Activated B cell treated with CpG ODN at 0.5 μM for 24 hours (primary cell): ENCODE measurements at regions of chr1 and their contacts with region 1.

Region 1: GRCh38 chr1:230978491-230979388 is at the starts of genes ARV1 and TTC13:
- DNase-seq: peak; percentile 93
- ATAC-seq: peak; percentile 95
- H3K4me3 Mint-ChIP-seq: peak within 1 kb of the TSS; percentile 96
- H3K27ac Mint-ChIP-seq: peak within 1 kb of the TSS; percentile 99
- H3K4me1 Mint-ChIP-seq: peaks cover 29% of the 10 kb centered on the region
- H3K27me3 Mint-ChIP-seq: no peaks in the 10 kb centered on the region
- CTCF ChIP-seq: no peak
- total RNA-seq, gene ARV1: 13.1 and 13.7 TPM in 2 replicates
- total RNA-seq, gene TTC13: 30.9 and 35.4 TPM in 2 replicates

Region 2: DNA sequence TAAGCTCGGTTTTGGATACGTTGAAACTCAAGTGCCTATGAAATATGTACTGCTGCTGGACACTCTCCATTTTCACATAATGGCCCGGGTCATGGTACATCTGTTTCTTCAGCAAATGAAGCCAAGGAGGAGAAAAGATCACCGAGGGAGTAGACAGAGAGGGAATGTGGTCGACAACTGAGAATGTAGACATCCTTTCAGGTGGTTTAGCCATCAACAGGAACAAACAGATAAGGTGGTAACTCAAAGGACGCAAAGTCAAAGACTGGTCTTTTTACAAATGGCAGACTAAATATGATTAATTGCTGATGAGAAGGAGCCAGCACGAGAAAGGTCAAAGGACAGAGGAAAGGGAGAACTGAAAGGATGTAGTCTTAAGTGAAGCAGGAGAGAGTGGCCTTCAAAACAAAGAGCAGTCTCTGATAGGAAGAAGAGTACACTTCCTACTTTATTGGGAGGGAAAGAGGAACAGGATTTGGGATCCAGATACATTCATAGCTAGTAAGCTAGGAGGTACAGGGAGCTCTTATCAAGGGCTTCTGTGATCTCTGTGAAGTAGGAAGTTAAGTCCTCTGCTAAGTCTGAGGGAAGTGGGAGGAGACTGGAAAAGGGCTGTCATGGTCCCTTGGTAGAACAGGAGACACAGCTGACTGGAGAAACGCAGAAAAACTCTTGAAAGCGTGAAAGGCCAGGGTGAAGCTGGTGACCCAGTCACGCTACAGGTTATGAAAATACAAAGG is 1498.9 kb before region 1 on chr1:
- CTCF ChIA-PET with region 1: no interaction called
- POLR2A ChIA-PET with region 1: no interaction called
- intact Hi-C with region 1: loop called (anchors 5 kb)
- DNase-seq: peak; percentile 25
- ATAC-seq: peak; percentile 85
- H3K4me3 Mint-ChIP-seq: peak overlapping the region; percentile 33
- H3K27ac Mint-ChIP-seq: peak overlapping the region; percentile 89
- H3K4me1 Mint-ChIP-seq: peaks cover 46% of the 10 kb centered on the region
- H3K27me3 Mint-ChIP-seq: no peaks in the 10 kb centered on the region
- CTCF ChIP-seq: no peak

Region 3: GRCh38 chr1:230599926-230600653 is 378.6 kb before region 1 on chr1:
- CTCF ChIA-PET with region 1: no interaction called
- POLR2A ChIA-PET with region 1: no interaction called
- intact Hi-C with region 1: no loop called
- DNase-seq: no peak
- ATAC-seq: no peak
- H3K4me3 Mint-ChIP-seq: no peak overlapping the region
- H3K27ac Mint-ChIP-seq: no peak overlapping the region
- H3K4me1 Mint-ChIP-seq: no peaks in the 10 kb centered on the region
- H3K27me3 Mint-ChIP-seq: peaks cover 16% of the 10 kb centered on the region
- CTCF ChIP-seq: no peak

Region 4: DNA sequence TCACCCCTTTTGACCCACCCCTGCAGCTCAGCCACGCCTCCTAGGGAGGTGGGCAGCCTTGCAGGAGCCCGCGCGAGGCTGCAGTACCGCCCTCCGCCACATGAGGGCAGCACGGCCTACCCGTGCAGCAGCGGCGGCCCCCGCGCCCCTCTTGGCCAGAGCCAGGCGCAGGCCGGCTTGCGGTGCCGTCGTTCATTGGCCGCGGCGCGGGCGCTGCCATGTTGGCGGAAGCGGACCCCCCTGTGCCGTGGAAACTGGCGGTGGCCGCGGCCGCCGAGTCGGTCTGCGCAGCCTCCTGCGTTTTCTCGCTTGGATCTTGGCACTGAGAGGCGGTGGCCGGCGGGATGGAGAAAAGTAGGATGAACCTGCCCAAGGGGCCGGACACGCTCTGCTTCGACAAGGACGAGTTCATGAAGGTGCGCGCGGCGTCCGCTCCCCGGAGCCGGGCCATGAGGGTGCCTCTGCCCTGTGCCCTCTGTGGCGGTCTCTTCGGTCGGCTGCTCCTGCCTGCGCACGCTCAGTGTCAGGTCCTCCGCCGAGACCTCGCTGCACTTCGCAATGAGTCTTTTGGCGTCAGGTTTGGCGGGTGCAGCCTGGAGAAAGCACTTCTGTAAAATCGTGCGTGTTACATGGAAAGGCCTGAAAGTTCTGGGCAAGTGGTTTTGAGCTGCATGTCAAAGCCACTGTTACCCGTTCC is 336.3 kb before region 1 on chr1 and contains the start of gene COG2:
- CTCF ChIA-PET with region 1: no interaction called
- POLR2A ChIA-PET with region 1: no interaction called
- intact Hi-C with region 1: loop called (anchors 1 kb)
- DNase-seq: peak; percentile 100
- ATAC-seq: peak; percentile 87
- H3K4me3 Mint-ChIP-seq: peak within 1 kb of the TSS; percentile 98
- H3K27ac Mint-ChIP-seq: peak within 1 kb of the TSS; percentile 96
- H3K4me1 Mint-ChIP-seq: peaks cover 50% of the 10 kb centered on the region
- H3K27me3 Mint-ChIP-seq: peaks cover 8% of the 10 kb centered on the region
- CTCF ChIP-seq: peak; percentile 96
- total RNA-seq, gene COG2: 38.5 and 39.0 TPM in 2 replicates

Region 5: DNA sequence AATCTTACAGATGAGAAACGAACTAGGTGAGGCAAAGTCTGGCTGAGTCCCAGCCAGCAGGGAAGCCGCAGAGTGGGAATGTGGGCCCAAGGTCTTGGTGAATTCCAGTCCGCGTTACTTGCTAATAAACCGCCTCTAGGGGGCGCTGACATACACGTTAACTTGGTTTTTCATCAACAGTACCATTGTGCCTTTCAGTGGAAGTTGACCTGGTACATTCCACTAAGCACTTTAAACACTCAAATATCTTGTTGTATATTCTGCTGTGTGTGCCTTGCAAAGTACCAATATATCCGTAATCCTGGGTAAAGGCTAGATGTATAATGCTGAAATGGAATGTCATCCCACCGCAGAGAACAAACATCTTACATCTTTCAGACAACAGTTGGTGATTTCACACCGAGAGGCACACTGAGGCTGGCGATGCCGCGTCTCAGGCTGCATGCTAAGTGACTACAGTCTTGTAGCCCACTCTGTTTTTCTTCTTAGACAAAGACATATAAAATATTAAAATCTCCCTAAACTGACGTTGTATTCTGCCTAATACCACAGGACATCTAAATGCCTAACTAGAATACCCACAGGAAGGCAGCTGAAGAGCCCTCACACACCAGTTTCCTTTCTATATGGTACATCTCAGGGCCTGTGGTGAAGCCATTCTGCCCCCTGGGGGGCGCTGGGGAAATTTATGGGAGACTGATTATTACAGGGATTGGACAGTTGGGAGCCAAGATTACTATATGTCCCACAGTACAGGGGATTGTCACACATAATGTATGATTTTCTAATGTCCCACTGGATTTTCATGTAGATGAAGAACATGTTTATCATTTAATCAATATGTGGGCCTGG is 61.2 kb before region 1 on chr1:
- CTCF ChIA-PET with region 1: interaction called, 13 read pairs
- POLR2A ChIA-PET with region 1: no interaction called
- intact Hi-C with region 1: loop called (anchors 1 kb)
- DNase-seq: peak; percentile 36
- ATAC-seq: peak; percentile 79
- H3K4me3 Mint-ChIP-seq: no peak overlapping the region
- H3K27ac Mint-ChIP-seq: peak overlapping the region; percentile 11
- H3K4me1 Mint-ChIP-seq: no peaks in the 10 kb centered on the region
- H3K27me3 Mint-ChIP-seq: no peaks in the 10 kb centered on the region
- CTCF ChIP-seq: peak; percentile 52

Region 6: DNA sequence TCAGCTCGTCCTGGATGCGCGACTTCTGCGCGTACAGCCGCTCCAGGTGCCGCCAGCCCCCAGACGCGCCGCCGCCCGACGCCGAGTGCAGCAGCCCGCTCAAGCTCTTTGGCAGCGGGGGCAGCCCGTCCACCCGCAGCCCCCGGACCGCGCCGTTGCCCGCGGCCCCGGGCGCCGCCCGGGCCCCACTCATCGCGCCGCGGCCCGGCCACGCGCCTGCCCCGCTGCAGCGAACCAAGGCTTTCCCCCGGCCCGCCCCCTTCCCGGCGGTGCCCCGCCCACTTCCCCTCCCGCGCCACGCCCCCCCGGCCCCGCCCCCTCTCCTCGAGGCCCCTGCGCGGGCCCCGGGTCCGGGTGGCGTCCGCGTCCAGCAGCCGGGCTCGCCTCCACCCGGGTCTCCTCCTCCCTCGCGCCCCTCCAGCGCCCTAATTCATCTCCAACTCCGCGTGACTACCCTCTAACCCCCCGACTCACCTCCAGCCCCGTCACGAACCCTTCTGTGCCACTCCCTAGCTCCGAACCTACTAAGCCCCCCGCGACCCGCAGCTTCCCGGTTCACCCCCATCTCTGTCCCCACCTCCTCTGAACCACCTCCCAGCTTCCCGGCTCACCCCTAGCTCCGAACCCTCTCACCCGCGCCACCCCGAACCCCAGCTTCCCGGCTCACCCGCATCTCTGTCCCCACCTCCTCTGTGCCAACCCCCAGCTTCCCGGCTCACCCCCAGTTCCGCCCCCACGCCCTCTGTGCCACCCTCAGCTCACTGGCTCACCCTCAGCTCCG is 61.5 kb after region 1 on chr1 and contains the start of gene FAM89A:
- CTCF ChIA-PET with region 1: no interaction called
- POLR2A ChIA-PET with region 1: interaction called, 17 read pairs
- intact Hi-C with region 1: loop called (anchors 1 kb)
- DNase-seq: peak; percentile 70
- ATAC-seq: peak; percentile 84
- H3K4me3 Mint-ChIP-seq: peak within 1 kb of the TSS; percentile 85
- H3K27ac Mint-ChIP-seq: peak within 1 kb of the TSS; percentile 35
- H3K4me1 Mint-ChIP-seq: peaks cover 17% of the 10 kb centered on the region
- H3K27me3 Mint-ChIP-seq: peaks cover 4% of the 10 kb centered on the region
- CTCF ChIP-seq: no peak
- total RNA-seq, gene FAM89A: 5.2 and 5.3 TPM in 2 replicates

Region 7: DNA sequence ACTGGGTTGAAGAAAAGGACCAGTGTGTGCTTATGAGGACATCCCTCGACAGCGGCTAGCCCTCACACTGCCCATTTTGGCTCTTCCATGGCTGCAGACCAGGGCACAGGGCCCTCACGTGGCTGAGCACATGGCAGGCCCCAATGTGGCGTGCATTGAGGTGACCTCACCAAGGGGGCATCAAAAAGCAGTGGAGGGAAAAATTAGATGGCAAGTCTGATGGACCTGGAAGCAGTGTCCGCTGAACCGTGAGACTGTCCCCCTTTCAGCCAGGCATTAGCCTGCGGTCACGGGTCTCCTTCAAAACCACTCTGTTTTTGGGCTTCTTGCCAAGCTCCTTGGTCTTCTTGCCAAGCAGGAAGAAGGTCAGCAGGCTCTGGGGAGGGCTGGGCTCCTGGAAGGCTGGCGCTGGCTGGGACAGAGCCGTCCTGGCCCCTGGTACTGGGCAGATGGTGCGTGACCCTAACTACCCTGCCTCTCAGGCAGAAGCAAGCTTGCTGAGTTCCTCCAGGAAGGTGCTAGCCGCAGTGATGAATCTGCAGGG is 214.0 kb after region 1 on chr1:
- CTCF ChIA-PET with region 1: no interaction called
- POLR2A ChIA-PET with region 1: no interaction called
- intact Hi-C with region 1: no loop called
- DNase-seq: no peak
- ATAC-seq: no peak
- H3K4me3 Mint-ChIP-seq: no peak overlapping the region
- H3K27ac Mint-ChIP-seq: no peak overlapping the region
- H3K4me1 Mint-ChIP-seq: no peaks in the 10 kb centered on the region
- H3K27me3 Mint-ChIP-seq: peaks cover 33% of the 10 kb centered on the region
- CTCF ChIP-seq: no peak

Region 8: DNA sequence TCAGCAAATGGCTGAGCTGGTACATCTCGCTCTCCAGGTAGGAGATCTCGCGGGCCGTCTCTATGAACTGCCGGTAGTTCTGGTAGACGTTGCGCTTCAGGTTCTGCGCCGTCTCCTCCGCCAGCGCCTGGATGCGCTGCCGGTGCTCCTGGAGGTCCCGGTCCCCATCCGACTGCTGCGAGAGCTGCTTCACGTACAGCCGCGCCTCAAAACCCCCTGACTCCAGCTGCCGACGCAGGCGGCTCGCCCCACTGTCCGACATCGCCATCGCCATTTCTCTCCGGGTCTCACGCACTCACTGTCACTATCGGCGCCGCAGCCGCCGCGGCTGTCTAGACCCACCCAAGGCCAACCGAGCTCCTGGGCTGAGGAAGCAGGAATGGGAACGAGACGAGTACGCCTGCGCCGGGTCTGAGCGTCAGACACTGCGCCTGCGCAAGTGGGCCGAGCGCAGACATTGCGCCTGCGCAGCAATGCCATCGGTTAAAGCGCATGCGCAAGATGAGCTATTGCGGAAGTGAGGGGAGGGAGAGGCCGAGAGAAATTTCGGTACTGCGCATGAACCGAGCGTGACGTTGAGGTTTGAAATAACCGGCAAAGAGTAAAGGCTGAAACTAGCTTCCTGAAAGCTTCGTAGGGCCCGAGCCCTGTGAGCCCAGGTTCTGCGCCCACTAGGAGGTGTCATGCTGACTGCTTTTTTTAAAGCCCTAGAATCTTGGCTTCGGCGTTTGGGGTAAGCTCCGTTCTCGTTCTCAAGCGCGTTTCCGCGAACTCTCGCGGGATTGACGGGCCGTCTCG is 358.9 kb after region 1 on chr1 and contains the start of gene EXOC8:
- CTCF ChIA-PET with region 1: no interaction called
- POLR2A ChIA-PET with region 1: interaction called, 4 read pairs
- intact Hi-C with region 1: loop called (anchors 1 kb)
- DNase-seq: peak; percentile 99
- ATAC-seq: peak; percentile 78
- H3K4me3 Mint-ChIP-seq: peak within 1 kb of the TSS; percentile 99
- H3K27ac Mint-ChIP-seq: peak within 1 kb of the TSS; percentile 99
- H3K4me1 Mint-ChIP-seq: peaks cover 66% of the 10 kb centered on the region
- H3K27me3 Mint-ChIP-seq: peaks cover 1% of the 10 kb centered on the region
- CTCF ChIP-seq: no peak
- total RNA-seq, gene EXOC8: 21.7 and 24.9 TPM in 2 replicates

Region 9: DNA sequence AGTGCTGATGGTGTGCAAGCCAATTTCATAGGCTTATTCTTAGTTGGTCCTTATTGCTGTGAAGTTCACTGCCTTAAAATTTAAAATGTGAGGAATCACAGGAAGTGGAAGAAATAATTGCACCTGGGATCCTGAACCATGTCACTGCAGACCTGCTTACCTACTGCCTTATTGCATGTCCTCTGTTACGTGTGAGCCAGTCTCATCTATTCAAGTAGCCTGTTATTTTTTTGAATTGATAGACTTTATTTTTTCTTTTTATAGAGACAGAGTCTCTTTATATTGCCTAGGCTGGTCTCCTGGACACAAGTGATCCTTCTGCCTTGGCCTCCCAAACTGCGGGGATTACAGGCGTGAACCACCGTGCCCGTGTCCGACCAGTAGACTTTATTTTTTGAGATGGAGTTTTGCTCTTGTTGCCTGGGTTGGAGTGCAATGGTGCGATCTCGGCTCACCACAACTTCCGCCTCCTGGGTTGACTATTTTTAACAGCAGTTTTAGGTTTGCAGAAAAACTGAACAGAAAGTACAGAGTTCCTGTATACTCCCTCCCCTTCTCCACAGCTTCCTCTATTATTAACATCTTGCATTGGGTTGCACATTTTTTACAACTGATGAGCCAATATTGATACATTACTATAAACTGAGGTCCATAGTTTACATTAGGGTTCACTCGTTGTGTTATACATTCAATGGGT is 633.8 kb after region 1 on chr1:
- CTCF ChIA-PET with region 1: no interaction called
- POLR2A ChIA-PET with region 1: no interaction called
- intact Hi-C with region 1: loop called (anchors 5 kb)
- DNase-seq: peak; percentile 51
- ATAC-seq: peak; percentile 93
- H3K4me3 Mint-ChIP-seq: peak overlapping the region; percentile 68
- H3K27ac Mint-ChIP-seq: peak overlapping the region; percentile 78
- H3K4me1 Mint-ChIP-seq: peaks cover 65% of the 10 kb centered on the region
- H3K27me3 Mint-ChIP-seq: peaks cover 3% of the 10 kb centered on the region
- CTCF ChIP-seq: no peak